SK-N-SH (cell line): ENCODE measurements at regions of chr19 and their contacts with region 1.

Region 1: DNA sequence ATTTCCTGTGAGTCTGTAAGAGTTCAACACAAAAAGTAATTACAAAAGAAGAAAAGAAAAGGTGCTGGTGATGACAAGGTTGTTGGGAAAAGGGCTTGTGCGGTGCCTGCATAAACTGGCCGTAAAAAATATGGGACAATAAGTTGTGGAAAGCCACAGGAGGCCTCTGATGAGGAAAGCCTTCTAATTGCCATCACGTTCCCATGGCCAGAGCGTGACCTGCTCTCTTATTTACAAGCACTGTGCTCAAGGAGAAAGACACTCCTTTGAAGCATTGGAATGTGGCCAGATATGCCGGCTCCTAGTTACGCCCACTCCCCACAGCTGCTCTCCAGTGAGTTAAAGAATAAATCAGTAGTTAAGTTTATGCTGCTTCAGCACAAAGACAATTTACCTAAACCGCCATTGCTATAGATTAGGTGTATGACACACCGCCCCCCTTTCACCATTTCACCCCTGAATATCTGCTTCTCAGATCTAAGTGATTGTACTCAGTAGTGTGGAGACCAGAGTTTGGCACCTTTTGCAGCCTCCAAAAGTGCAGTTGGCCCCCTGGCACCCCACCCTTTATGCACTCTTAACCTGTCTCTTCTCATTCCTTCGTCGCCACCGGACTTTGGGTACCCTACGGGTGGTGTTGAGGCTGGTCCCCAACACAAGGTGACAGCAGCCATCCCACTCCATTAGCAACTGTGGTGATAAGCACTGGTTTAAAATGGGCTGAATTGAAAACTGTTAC is 8.1 kb upstream of the PGLYRP1 start:
- DNase-seq: no peak
- H3K4me3 ChIP-seq: no peak overlapping the region
- H3K27ac ChIP-seq: no peak overlapping the region
- H3K4me1 ChIP-seq: no peaks in the 10 kb centered on the region
- H3K27me3 ChIP-seq: peaks cover 12% of the 10 kb centered on the region; the same call in 1 of the 2 replicates
- CTCF ChIP-seq: no peak
- EP300 ChIP-seq: no peak
- RAD21 ChIP-seq: no peak

Region 2: DNA sequence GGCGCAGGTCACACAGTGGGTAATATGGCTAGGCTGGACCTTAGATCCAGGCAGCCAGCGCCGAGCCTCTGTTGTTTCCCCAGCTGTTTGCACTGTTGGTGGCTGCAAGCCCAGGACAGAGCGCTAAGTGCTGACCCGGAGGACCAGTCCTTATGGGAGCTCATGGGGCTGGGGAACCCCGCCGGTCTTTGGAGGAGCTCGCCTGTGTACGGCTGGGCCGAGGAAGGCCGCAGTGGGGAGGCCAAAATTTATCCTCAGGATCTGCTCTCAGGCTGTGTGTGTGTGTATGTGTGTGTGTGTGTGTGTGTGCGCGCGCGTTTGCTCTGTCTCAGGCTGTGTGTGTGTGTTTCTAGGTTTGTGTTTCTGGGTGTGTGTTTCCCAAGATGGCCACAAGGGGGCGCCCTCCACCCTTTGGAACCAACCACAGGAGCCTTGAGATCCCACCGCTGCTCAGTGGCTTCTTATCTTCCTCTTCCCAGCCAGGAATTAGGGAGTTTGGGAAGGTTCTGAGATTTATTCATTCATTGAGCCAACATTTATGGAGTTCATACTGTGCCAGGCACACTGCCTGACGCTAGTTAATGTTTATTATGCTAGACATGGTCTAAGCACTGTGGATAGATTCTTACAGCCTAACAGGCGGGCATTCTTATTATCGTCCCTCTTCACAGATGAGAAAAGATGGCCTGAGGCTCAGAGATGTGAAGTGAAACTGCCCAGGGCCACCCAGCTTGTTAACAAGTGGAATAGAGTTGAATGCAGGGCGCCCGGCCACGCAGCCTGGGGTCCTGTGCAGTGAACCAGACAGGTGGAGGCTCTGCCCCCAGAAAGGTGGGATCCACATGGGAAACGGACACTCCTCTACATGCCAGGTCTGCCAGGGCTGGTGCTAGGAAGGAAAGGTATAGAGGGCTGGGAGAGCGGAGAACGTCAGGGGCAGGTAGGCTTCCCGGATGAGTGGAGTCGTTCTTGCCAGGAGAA is 21.2 kb before region 1 on chr19:
- CTCF ChIA-PET with region 1: interaction called, 23 read pairs
- POLR2A ChIA-PET with region 1: interaction called, 4 read pairs
- DNase-seq: peak; percentile 80
- H3K4me3 ChIP-seq: no peak overlapping the region
- H3K27ac ChIP-seq: no peak overlapping the region
- H3K4me1 ChIP-seq: peaks cover 0 to 6% of the 10 kb centered on the region in 2 experiments; a peak in 2 of 4 replicates
- H3K27me3 ChIP-seq: no peaks in the 10 kb centered on the region
- CTCF ChIP-seq: peak; percentile 83
- EP300 ChIP-seq: no peak
- RAD21 ChIP-seq: peak; percentile 62

Region 3: DNA sequence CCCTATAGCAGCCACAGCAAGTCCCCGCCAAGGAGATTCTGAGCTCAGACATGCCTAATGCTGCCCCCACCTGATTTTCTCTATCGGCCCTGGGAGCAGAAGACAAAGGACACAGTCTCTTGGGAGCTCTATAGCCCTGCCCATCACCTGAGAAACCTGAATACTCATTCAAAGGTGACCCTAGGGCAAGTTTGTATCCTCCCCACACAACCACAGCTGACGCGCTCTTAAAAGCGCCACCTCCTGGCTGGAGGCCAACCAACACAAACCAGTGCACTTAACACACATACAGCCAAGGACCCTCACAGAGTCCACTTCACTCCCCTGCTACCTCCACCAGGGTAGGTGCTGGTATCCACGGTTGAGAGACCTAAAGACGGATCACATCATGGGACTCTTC is 18.6 kb after region 1 on chr19:
- CTCF ChIA-PET with region 1: interaction called, 91 read pairs
- POLR2A ChIA-PET with region 1: no interaction called
- DNase-seq: no peak
- H3K4me3 ChIP-seq: no peak overlapping the region
- H3K27ac ChIP-seq: no peak overlapping the region
- H3K4me1 ChIP-seq: no peaks in the 10 kb centered on the region
- H3K27me3 ChIP-seq: peaks cover 87% of the 10 kb centered on the region; the same call in 1 of the 2 replicates
- CTCF ChIP-seq: no peak
- EP300 ChIP-seq: no peak
- RAD21 ChIP-seq: no peak

Region 4: DNA sequence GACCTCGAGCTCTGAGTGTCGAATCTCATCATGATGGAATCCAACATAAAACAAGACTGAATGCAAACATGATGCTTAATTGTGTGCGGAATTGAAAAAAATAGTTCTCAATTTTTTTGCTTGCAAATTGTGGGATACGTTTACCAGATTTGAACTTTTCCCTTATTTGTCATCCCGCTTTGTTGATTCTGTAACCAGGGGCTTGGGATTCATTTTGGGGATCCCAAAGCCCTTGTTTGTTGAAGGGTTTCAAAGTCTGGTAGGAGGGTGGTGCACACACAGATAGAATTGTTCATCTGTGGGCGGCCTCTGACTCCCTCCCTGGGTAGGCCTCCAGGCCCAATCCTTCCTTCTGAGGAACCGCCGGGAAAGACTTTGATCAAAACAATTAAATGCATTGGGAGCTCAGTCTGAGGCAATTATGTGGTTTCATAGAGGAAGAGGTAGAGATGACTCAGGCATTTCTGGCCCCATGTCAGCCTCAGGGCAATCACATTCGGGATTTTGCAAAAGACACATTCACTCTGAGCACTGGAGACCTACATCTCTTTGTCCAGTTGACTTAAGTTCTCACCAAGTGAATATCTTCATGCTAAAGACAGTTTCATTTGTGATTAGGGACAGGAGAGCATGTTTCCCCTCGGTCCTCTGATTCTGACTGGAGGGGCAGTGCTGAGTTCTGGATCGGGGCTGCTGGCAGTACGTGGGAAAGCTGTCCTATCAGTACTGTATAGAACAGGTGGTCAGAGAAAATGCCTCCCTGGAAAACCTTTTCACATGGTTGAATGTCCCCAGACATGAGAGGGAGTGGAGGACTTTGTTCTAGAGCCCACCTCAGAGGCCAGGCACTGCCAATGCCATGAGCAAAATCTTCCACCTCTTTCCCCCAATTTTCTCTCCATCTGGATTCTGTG is 37.6 kb after region 1 on chr19:
- CTCF ChIA-PET with region 1: interaction called, 31 read pairs
- POLR2A ChIA-PET with region 1: no interaction called
- DNase-seq: no peak
- H3K4me3 ChIP-seq: no peak overlapping the region
- H3K27ac ChIP-seq: peak overlapping the region in 1 of 2 experiments; percentile 62; a peak in 1 of 4 replicates
- H3K4me1 ChIP-seq: peaks cover 0 to 20% of the 10 kb centered on the region in 2 experiments; a peak in 2 of 4 replicates
- H3K27me3 ChIP-seq: no peaks in the 10 kb centered on the region; the same call in 1 of the 2 replicates
- CTCF ChIP-seq: no peak
- EP300 ChIP-seq: peak in 1 of 2 experiments; percentile 50; a peak in 1 of 4 replicates
- RAD21 ChIP-seq: no peak

Region 5: DNA sequence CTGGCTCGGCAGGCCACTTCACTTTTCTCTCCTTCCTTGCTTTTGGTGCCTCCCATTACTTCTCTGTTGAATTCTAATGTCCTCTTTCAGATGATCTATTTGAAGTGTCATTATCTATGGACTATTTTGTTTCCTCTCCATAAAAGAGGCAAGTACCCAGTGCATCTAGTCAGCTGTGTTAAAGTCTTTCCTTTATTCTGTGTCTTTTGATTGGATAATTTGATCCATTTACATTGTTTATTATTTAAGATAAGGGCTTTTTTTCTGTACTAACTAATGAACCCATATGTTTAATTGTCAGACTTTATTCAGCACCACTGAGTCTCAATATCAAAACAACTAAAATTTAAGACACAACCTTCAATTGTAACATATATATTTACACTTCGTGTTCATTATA is 57.1 kb after region 1 on chr19:
- CTCF ChIA-PET with region 1: interaction called, 15 read pairs
- POLR2A ChIA-PET with region 1: no interaction called
- DNase-seq: no peak
- H3K4me3 ChIP-seq: no peak overlapping the region
- H3K27ac ChIP-seq: no peak overlapping the region
- H3K4me1 ChIP-seq: no peaks in the 10 kb centered on the region
- H3K27me3 ChIP-seq: no peaks in the 10 kb centered on the region
- CTCF ChIP-seq: no peak
- EP300 ChIP-seq: no peak
- RAD21 ChIP-seq: no peak

Region 6: GRCh38 chr19:46271481-46272197 is 240.7 kb after region 1 on chr19:
- CTCF ChIA-PET with region 1: interaction called, 109 read pairs
- POLR2A ChIA-PET with region 1: no interaction called
- DNase-seq: no peak
- H3K4me3 ChIP-seq: no peak overlapping the region
- H3K27ac ChIP-seq: peak overlapping the region in 1 of 2 experiments; percentile 81; a peak in 2 of 4 replicates
- H3K4me1 ChIP-seq: peaks cover 0 to 4% of the 10 kb centered on the region in 2 experiments; a peak in 1 of 4 replicates
- H3K27me3 ChIP-seq: no peaks in the 10 kb centered on the region; the same call in 1 of the 2 replicates
- CTCF ChIP-seq: no peak
- EP300 ChIP-seq: peak in 1 of 2 experiments; percentile 88; a peak in 2 of 4 replicates
- RAD21 ChIP-seq: no peak